Activated CD8-positive, alpha-beta T cell treated with anti-CD3 and anti-CD28 coated beads, Interleukin-2, amount 10 ng/mL, durations not matched to agents 7 days and 5 days (primary cell): ENCODE measurements at regions of chr12 and their contacts with region 1.

Region 1: DNA sequence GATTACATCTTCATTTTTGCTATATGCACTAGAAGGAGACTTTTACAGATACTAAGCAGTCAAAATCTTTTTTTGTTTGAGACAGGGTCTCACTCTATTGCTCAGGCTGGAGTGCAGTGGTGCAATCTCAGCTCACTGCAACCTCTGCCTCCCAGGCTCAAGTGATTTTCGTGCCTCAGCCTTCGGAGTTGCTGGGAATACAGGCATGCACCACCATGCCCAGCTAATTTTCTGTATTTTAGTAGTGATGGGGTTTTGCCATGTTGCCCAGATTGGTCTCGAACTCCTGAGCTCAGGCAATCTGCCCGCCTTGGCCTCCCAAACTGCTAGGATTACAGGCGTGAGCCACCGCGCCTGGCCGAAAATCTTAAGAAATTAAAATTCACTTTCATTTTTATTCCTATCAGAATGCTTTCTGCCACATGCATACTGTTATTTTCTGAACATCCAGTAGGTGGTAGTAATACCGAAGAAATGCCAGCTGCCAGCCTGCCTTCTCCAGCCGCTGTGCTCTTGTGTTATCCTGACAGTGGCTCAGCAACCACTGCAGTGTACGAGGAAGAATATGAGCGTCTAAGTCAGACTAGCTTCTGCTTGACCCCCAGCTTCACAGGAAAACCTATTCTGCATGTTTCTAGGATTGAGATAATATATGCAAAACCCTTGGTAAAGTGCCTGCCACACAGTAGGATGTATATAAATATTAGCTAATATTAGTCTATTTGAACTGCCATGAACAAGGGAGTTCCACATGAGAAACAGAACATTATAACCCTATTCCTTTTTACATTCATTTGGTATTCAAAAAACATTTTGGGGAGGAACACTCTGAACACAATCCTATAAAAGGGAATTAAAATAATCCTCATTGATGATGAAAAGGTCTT is 54.2 kb downstream of the RPAP3 start:
- DNase-seq: peak; percentile 65
- ATAC-seq: peak; percentile 89
- H3K4me3 Mint-ChIP-seq: no peak overlapping the region
- H3K27ac Mint-ChIP-seq: peak overlapping the region; percentile 39
- H3K4me1 Mint-ChIP-seq: peaks cover 12% of the 10 kb centered on the region
- H3K27me3 Mint-ChIP-seq: no peaks in the 10 kb centered on the region

Region 2: DNA sequence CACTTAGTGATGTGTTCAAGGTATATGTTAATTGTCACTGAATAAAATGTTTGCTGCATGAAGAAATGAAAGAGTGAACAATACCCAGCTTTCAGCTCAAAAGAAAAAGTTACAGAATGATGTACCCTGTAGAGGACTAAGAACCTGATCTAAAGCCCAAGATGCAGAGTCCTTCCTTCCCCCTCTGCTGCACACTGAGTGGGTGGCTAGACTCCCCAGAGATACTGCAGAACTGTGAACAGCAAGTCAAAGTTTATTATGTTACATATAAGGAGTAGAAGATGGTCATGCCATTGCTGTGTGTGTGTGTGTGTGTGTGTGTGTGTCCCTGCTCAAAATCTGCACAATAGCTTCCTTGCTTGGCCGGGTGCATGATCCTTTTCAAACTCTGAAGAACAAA is 29.7 kb before region 1 on chr12:
- CTCF ChIA-PET with region 1: no interaction called
- POLR2A ChIA-PET with region 1: no interaction called
- DNase-seq: no peak
- ATAC-seq: no peak
- H3K4me3 Mint-ChIP-seq: no peak overlapping the region
- H3K27ac Mint-ChIP-seq: no peak overlapping the region
- H3K4me1 Mint-ChIP-seq: no peaks in the 10 kb centered on the region
- H3K27me3 Mint-ChIP-seq: no peaks in the 10 kb centered on the region

Region 3: GRCh38 chr12:47636908-47637780 is 14.5 kb before region 1 on chr12:
- CTCF ChIA-PET with region 1: interaction called, 24 read pairs
- POLR2A ChIA-PET with region 1: no interaction called
- DNase-seq: peak; percentile 56
- ATAC-seq: no peak
- H3K4me3 Mint-ChIP-seq: no peak overlapping the region
- H3K27ac Mint-ChIP-seq: peak overlapping the region; percentile 18
- H3K4me1 Mint-ChIP-seq: peaks cover 5% of the 10 kb centered on the region
- H3K27me3 Mint-ChIP-seq: no peaks in the 10 kb centered on the region

Region 4: GRCh38 chr12:47686645-47687240 is 35.1 kb after region 1 on chr12:
- CTCF ChIA-PET with region 1: interaction called, 28 read pairs
- POLR2A ChIA-PET with region 1: no interaction called
- DNase-seq: peak; percentile 48
- ATAC-seq: peak; percentile 58
- H3K4me3 Mint-ChIP-seq: no peak overlapping the region
- H3K27ac Mint-ChIP-seq: no peak overlapping the region
- H3K4me1 Mint-ChIP-seq: no peaks in the 10 kb centered on the region
- H3K27me3 Mint-ChIP-seq: no peaks in the 10 kb centered on the region